A673 (cell line): ENCODE measurements at regions of chr2 and their contacts with region 1.

Region 1: DNA sequence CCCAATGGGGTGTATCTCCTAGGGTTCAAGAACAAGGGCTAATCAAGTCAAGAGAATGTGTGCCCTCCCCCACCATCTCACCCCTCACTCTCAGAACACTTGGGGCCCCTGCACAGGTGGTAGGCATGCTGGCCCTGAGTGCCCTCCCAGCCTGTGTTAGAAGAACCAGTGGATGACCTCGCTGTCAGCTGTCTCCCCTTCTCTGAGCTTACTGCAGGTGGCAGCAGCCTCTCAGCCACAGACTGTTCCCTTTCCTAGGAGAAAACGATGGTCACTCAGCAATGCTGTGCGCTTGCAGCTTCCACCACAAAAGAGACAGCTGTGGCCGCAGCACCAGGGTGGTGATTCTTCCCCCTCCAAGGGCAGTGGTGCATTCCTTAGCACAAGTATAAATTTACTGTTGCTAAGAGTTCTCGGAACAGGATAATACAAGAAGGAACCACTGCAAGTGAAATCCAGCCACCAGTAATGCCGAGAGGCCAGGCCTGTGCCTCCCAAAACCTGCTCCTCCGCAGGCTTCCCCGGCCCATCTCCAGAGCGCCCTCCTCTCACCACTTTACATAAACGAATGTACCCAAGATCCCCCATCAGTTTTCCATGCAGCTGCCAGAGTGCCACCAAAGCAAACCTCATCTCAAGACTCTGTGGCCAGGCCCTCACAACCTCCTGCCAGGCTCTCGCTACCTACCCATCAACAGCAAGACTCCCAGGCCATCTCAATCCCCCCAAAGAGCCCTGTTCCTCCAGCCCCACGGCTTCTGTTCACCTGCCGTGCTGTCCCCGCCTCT is 935 bp upstream of the RAMP1 start:
- DNase-seq: peak; percentile 77
- H3K4me3 ChIP-seq: peak overlapping the region; percentile 55
- H3K27ac ChIP-seq: peak overlapping the region; percentile 24
- H3K4me1 ChIP-seq: peaks cover 4% of the 10 kb centered on the region
- H3K27me3 ChIP-seq: no peaks in the 10 kb centered on the region
- CTCF ChIP-seq: peak; percentile 78

Region 2: DNA sequence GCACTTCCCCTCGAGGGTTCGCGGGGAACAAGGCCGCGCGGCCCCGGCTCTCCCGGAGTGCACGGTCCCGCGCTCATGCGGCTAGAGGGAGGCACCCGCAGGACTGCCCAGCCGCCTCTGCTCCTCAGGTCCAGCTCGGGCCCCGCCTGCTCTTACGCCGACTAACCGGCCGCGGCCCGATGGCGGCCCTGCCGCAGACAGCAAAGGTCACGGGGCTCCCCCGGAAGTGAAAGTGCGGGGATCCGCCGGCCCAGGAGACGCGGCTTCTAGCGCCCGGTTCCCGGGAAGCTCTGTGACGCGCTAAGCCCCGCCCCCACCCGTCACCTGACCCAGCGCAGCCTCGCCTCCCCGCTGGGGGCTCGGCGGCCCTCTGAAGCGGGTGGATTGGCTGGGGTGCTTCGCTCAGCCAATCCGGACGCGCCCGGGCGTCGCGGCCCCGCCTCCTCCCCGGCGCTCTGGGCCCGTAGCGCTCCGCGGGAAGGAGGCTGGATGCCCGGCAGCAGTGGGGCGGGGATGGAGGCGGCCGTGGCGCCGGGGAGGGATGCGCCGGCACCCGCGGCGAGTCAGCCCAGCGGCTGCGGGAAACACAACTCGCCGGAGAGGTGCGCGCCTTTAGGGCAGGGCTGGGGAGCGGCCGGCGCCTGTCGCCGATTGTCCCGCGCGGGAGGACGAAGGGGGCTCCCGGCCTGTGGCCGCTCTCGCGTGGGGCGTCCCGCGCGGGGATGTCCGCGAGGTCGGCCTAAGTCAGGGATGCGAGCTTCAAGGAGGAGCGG is 202.2 kb after region 1 on chr2 and contains the start of gene SCLY:
- CTCF ChIA-PET with region 1: interaction called, 4 read pairs
- POLR2A ChIA-PET with region 1: no interaction called
- intact Hi-C with region 1: loop called (anchors 10 kb)
- DNase-seq: peak; percentile 98
- H3K4me3 ChIP-seq: peak within 1 kb of the TSS; percentile 85
- H3K27ac ChIP-seq: peak within 1 kb of the TSS; percentile 94
- H3K4me1 ChIP-seq: peaks cover 11% of the 10 kb centered on the region
- H3K27me3 ChIP-seq: no peaks in the 10 kb centered on the region
- CTCF ChIP-seq: no peak
- total RNA-seq, gene SCLY: 69.9 and 72.4 TPM in 2 replicates

Region 3: GRCh38 chr2:238263204-238264071 is 404.9 kb after region 1 on chr2:
- CTCF ChIA-PET with region 1: interaction called, 8 read pairs
- POLR2A ChIA-PET with region 1: no interaction called
- intact Hi-C with region 1: loop called (anchors 1 kb)
- DNase-seq: peak; percentile 80
- H3K4me3 ChIP-seq: no peak overlapping the region
- H3K27ac ChIP-seq: no peak overlapping the region
- H3K4me1 ChIP-seq: no peaks in the 10 kb centered on the region
- H3K27me3 ChIP-seq: no peaks in the 10 kb centered on the region
- CTCF ChIP-seq: peak; percentile 89